Heart left ventricle (tissue), 16 donors: ENCODE measurements at regions of chr7 and their contacts with region 1.

Region 1: DNA sequence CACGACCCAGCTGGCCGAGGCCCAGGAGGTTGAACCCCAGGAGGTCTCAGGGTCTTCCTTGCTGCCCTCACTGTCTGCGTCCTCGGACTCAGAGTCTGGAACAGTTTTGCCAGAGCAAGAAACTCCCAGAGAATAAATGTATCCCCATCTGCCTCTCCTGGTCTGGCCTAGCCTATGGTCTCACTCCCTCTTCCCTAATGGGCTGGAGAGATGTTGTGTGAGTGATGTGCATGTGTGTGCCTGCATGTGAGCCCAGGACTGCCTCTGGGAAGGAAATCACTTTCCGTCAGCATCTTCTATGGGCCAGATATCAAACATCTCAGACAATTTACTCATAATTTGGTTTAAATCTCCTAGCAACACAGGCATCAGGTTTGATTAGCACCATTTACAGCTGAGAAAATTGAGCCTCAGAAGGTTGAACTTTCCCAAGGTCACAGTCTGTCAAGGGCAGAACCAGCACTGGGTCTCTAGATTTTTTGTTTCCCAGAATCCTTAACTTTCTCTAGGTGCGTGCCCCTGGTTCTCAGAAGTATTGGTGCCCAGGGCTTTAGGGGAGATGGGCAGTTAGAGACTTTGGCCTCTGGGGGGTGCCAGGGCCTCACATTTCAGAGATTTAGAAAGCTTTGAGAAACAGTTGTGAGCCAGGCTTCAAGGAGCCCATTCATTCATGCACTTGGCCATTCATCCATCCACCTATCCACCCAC is 4.9 kb downstream of the TMEM270 start:
- DNase-seq: peak in 1 of 5 donors; percentile 57
- ATAC-seq: peak; percentile 39 to 77 (median 76)
- H3K4me3 ChIP-seq: no peak overlapping the region
- H3K27ac ChIP-seq: no peak overlapping the region
- H3K4me1 ChIP-seq: peaks cover 0 to 17% (median 8%) of the 10 kb centered on the region in 12 donors
- H3K27me3 ChIP-seq: no peaks in the 10 kb centered on the region
- CTCF ChIP-seq: peak; percentile 55 to 77 (median 68)
- POLR2A ChIP-seq: no peak

Region 2: DNA sequence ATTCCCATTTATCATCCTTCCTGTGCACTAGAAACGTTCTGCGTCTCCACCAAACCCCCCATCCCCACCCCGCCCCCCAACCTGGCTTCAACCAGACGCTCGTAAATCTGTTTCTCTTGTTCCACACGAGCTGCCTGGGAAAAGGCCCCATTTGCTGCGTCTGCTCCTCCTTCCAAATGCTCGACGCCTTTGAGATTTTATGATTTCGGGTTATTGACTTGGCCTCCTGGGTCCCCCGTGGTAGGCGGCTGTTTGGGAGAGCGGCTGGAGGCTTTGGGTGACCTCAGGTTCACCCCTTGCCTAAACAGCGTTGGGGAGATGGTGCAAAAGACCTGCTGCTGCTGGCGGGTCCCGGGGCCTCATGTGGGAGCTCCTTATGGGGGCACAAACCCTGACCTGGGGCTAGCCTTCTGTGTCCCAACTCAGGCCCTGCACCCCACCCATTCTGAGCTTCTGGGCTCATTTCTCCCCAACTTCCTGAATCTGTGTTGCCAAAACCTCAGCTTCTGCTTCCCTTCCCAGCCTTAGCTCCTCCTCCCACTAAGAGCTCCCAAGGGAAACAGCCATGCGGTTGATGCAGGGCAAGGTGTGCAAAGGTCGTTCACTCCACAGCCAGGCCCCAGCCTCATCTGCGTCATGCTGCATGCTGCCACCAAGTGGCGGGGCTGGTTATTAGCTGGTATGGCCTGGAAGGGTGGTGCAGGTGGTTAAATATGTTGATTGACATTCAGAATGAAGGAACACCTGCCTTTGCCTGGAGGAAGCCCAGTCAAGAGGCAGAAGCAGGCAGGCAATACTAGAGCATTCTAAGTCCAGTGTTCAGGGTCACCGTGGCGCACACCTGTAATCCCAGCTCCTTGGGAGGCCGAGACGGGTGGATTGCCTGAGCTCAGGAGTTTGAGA is 113.0 kb after region 1 on chr7:
- intact Hi-C with region 1: loop called in 3 of 10 experiments (anchors 2 to 10 kb)
- DNase-seq: peak in 4 of 5 donors; percentile 38 to 50 (median 48)
- ATAC-seq: peak in 3 of 4 donors; percentile 28 to 70 (median 52)
- H3K4me3 ChIP-seq: no peak overlapping the region
- H3K27ac ChIP-seq: no peak overlapping the region
- H3K4me1 ChIP-seq: peaks cover 0 to 15% (median 5%) of the 10 kb centered on the region in 12 donors
- H3K27me3 ChIP-seq: no peaks in the 10 kb centered on the region
- CTCF ChIP-seq: peak; percentile 18 to 47 (median 30)
- POLR2A ChIP-seq: no peak